Uterus (tissue), 4 donors: ENCODE measurements at regions of chr17 and their contacts with region 1.

Region 1: DNA sequence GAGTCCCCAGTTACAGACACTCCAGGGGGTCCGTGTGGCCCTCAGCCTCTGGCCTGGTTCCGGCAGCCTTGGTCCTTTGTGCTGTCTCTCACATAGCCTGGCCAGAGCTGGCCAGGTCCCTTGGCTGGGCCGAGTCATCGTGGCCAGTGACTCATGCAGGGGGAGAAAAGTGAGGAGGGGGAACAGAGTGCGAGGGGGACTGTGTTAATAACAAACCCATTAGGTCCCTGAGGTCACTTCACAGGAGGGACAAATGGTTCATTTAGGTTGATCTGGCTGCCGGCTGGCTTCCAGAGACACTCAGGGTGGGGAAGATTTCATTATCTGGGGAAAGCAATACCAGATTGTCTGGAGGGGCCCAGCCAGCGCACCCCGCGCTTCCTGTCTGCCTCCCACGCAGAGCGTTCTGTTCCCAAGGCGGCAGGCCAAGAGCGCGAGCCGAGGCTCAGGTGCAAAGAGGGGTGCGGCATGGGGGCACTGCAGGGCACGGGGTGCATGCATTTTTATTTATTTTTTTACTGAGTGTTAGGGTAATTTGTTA is 223.1 kb downstream of the SEC14L1 start:
- DNase-seq: peak; percentile 75
- H3K4me3 ChIP-seq: no peak overlapping the region
- H3K27ac ChIP-seq: peak overlapping the region; percentile 74 to 76
- H3K4me1 ChIP-seq: peaks cover 18 to 23% of the 10 kb centered on the region in 2 donors
- H3K27me3 ChIP-seq: no peaks in the 10 kb centered on the region
- CTCF ChIP-seq: no peak
- POLR2A ChIP-seq: no peak

Region 2: DNA sequence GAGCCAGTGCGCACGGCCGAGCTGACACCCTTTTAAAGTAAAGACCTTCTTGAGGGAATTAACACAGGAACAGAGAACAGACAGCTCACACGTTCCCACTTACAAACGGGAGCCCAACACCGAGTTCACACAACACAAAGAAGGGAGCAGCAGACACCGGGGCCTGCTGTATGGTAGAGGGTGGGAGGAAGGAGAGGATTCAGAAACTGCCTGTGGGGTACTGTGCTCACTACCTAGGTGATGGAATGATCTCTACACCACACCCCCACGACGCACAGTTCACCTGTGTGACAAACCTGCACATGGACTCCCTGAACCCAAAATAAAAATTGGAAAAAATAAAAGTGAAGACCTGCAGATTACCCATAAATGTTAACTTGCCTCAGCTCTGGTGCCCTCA is 732.2 kb after region 1 on chr17:
- intact Hi-C with region 1: loop called (anchors 5 kb)
- DNase-seq: no peak
- H3K4me3 ChIP-seq: no peak overlapping the region
- H3K27ac ChIP-seq: no peak overlapping the region
- H3K4me1 ChIP-seq: no peaks in the 10 kb centered on the region
- H3K27me3 ChIP-seq: no peaks in the 10 kb centered on the region
- CTCF ChIP-seq: no peak
- POLR2A ChIP-seq: no peak